ENCODE measurements at regions of chr17 and their contacts with region 1.

Region 1: DNA sequence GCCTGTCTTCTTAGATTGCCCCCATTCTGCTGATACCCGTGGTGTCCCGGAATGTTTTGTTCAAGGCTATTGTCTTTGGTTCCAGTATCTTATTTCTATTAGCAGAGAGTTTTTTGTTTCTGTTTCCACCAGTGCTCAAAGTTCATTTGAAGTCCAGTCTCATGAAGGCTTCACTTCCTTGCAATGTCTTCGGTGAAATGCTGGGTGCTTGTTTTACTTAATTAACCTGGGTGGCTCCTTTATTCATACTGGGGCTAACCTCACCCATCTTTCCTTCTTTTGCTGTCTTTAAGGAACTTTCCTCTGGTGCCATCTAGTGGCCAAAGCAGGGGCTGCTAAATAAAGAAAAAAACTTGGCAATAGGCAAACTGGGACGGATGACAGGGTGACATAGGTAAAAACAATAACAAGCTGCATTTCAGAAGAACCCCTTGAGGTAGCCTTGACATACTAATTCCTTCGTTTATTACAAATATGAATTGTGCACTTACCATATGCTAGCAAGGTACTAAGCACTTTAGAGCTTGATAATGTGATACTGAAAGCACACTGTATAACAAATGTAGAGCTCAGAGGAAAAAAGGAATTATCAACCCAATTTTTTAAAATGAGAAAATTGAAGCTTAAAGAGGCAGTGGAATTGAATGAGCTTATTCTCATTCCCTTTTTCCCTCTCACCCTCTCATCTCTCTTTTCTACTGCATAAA is 2.8 kb upstream of the SMIM36 start:
- DNase-seq: peak in 1 of 2 donors; percentile 49
- ATAC-seq: peak; percentile 65 to 89 (median 78)
- H3K4me3 ChIP-seq: no peak overlapping the region
- H3K27ac ChIP-seq: no peak overlapping the region
- H3K4me1 ChIP-seq: no peaks in the 10 kb centered on the region
- H3K27me3 ChIP-seq: peaks cover 0 to 2% (median 0%) of the 10 kb centered on the region in 3 donors
- CTCF ChIP-seq: peak; percentile 94

Region 2: GRCh38 chr17:54992797-54993639 is 521.0 kb before region 1 on chr17:
- intact Hi-C with region 1: loop called in 1 of 2 experiments (anchors 5 kb)
- DNase-seq: no peak
- ATAC-seq: peak in 3 of 4 donors; percentile 46 to 73 (median 66)
- H3K4me3 ChIP-seq: no peak overlapping the region
- H3K27ac ChIP-seq: no peak overlapping the region
- H3K4me1 ChIP-seq: no peaks in the 10 kb centered on the region
- H3K27me3 ChIP-seq: no peaks in the 10 kb centered on the region
- CTCF ChIP-seq: peak; percentile 72

Region 3: GRCh38 chr17:55356434-55357328 is 157.4 kb before region 1 on chr17:
- intact Hi-C with region 1: loop called (anchors 2 to 5 kb)
- DNase-seq: peak in 1 of 2 donors; percentile 34
- ATAC-seq: peak; percentile 53 to 76 (median 66)
- H3K4me3 ChIP-seq: no peak overlapping the region
- H3K27ac ChIP-seq: no peak overlapping the region
- H3K4me1 ChIP-seq: no peaks in the 10 kb centered on the region
- H3K27me3 ChIP-seq: no peaks in the 10 kb centered on the region
- CTCF ChIP-seq: peak; percentile 67

Region 4: DNA sequence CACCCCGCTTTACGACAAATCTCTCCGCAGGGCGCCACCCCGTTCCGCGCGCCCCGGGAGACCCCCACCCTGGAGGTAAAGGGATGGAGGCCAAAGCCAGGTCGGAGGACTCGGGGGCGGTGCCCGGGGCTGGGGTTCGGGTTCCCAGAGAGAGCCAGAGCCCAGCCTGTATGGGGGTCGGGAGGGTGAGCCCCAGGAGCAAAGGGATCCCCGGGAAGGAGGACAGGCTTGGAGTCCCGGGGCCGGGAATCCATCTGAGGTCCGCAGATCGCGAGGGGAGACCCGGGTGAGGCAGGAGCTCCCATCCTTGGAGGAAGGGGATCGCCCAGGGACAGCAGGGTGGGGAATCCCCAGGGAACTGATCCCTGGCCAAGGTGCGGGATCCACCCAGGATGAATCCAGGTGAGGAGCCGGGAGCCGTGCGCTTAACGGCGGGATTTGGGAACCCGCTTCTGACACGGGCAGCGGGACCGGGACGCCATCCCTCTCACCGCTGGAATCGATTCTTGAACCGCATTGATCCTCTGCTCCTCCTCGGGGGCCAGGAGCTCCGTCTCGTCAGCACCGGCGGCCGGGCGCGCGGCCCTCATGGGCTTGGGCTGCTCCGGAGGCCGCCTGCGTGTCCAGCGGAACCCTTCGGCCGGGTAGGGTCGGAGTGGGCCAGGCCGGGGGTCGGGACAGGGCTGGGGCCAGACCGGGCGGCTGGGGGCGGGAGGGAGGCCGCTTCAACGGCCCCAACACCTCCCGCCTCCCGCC is 92.7 kb before region 1 on chr17 and contains the start of gene MMD:
- intact Hi-C with region 1: loop called in 1 of 2 experiments (anchors 5 kb)
- DNase-seq: peak; percentile 26 to 60
- ATAC-seq: peak; percentile 10 to 42 (median 28)
- H3K4me3 ChIP-seq: peak within 1 kb of the TSS; percentile 85
- H3K27ac ChIP-seq: peak within 1 kb of the TSS; percentile 78
- H3K4me1 ChIP-seq: peaks cover 19% of the 10 kb centered on the region
- H3K27me3 ChIP-seq: peaks cover 0 to 4% (median 0%) of the 10 kb centered on the region in 3 donors
- CTCF ChIP-seq: no peak
- total RNA-seq, gene MMD: 3.0 to 9.2 (median 4.2) TPM

Region 5: GRCh38 chr17:55564081-55564480 is 50.0 kb after region 1 on chr17:
- intact Hi-C with region 1: no loop called
- DNase-seq: no peak
- ATAC-seq: no peak
- H3K4me3 ChIP-seq: no peak overlapping the region
- H3K27ac ChIP-seq: no peak overlapping the region
- H3K4me1 ChIP-seq: no peaks in the 10 kb centered on the region
- H3K27me3 ChIP-seq: no peaks in the 10 kb centered on the region
- CTCF ChIP-seq: no peak